Caco-2 (cell line): ENCODE measurements at regions of chr6 and their contacts with region 1.

Region 1: DNA sequence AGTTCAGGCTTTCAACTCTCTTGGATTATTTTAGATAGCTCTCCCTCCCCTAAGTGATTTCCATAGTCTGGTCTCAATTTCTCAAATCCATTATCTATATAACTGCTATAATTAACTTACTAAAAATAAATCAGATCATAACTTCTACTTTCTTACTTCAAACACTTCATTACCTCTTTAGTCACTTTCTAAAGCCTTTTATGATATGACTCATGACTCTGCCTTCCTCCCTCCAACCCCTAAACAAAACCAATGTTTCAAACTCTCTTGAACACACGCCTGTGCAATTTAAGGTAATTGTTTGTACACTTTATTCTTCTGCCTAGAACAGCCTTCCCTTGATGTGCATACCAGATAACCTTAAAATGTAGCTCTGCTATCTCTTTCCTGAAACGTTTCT is 100.5 kb downstream of the LMBRD1 start:
- DNase-seq: no peak
- H3K4me3 ChIP-seq: no peak overlapping the region
- H3K4me3 Mint-ChIP-seq: no peak overlapping the region
- H3K27ac Mint-ChIP-seq: no peak overlapping the region
- H3K4me1 ChIP-seq: no peaks in the 10 kb centered on the region
- H3K4me1 Mint-ChIP-seq: no peaks in the 10 kb centered on the region
- H3K27me3 ChIP-seq: no peaks in the 10 kb centered on the region
- H3K27me3 Mint-ChIP-seq: no peaks in the 10 kb centered on the region
- CTCF ChIP-seq: no peak

Region 2: GRCh38 chr6:68296126-68296525 is 1400.1 kb before region 1 on chr6:
- CTCF ChIA-PET with region 1: interaction called, 13 read pairs
- POLR2A ChIA-PET with region 1: no interaction called
- intact Hi-C with region 1: no loop called
- DNase-seq: no peak
- H3K4me3 ChIP-seq: no peak overlapping the region
- H3K4me3 Mint-ChIP-seq: no peak overlapping the region
- H3K27ac Mint-ChIP-seq: no peak overlapping the region
- H3K4me1 ChIP-seq: no peaks in the 10 kb centered on the region
- H3K4me1 Mint-ChIP-seq: peaks cover 6% of the 10 kb centered on the region
- H3K27me3 ChIP-seq: no peaks in the 10 kb centered on the region
- H3K27me3 Mint-ChIP-seq: no peaks in the 10 kb centered on the region
- CTCF ChIP-seq: no peak

Region 3: DNA sequence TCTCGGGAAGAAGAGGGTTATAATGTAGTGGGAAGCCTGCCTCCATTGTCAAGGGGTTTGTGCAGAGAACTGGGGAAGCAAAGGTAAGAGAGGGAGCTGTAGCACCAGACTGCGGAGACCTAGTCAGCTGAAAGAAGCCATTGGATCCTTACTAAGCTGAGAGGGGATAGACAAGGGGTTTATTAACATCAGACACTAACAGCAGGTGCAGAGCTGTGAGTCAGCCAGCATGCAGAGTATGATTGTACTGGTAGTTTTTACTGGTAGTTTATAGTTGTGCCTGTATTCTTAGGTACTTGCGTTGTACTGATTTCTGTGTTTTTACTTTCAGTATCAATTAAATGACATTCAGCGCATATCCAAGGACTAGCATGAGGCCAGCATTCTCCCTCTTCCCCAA is 152.3 kb after region 1 on chr6:
- CTCF ChIA-PET with region 1: no interaction called
- POLR2A ChIA-PET with region 1: no interaction called
- intact Hi-C with region 1: no loop called
- DNase-seq: no peak
- H3K4me3 ChIP-seq: no peak overlapping the region
- H3K4me3 Mint-ChIP-seq: no peak overlapping the region
- H3K27ac Mint-ChIP-seq: no peak overlapping the region
- H3K4me1 ChIP-seq: no peaks in the 10 kb centered on the region
- H3K4me1 Mint-ChIP-seq: no peaks in the 10 kb centered on the region
- H3K27me3 ChIP-seq: no peaks in the 10 kb centered on the region
- H3K27me3 Mint-ChIP-seq: peaks cover 6% of the 10 kb centered on the region
- CTCF ChIP-seq: no peak